ENCODE measurements at regions of chr16 and their contacts with region 1.

Region 1: GRCh38 chr16:66483689-66484481 is 56.8 kb downstream of the BEAN1 start:
- DNase-seq: peak; percentile 68
- H3K4me3 Mint-ChIP-seq: no peak overlapping the region
- H3K27ac Mint-ChIP-seq: peak overlapping the region; percentile 29
- H3K4me1 Mint-ChIP-seq: peaks cover 27% of the 10 kb centered on the region
- H3K27me3 Mint-ChIP-seq: no peaks in the 10 kb centered on the region

Region 2: GRCh38 chr16:66357153-66357928 is 126.5 kb before region 1 on chr16:
- intact Hi-C with region 1: loop called (anchors 5 kb)
- DNase-seq: no peak
- H3K4me3 Mint-ChIP-seq: no peak overlapping the region
- H3K27ac Mint-ChIP-seq: no peak overlapping the region
- H3K4me1 Mint-ChIP-seq: no peaks in the 10 kb centered on the region
- H3K27me3 Mint-ChIP-seq: peaks cover 15% of the 10 kb centered on the region

Region 3: GRCh38 chr16:66516808-66517585 is 33.1 kb after region 1 on chr16:
- intact Hi-C with region 1: loop called (anchors 1 kb)
- DNase-seq: peak; percentile 84
- H3K4me3 Mint-ChIP-seq: peak overlapping the region; percentile 88
- H3K27ac Mint-ChIP-seq: peak overlapping the region; percentile 99
- H3K4me1 Mint-ChIP-seq: peaks cover 78% of the 10 kb centered on the region
- H3K27me3 Mint-ChIP-seq: no peaks in the 10 kb centered on the region

Measured in activated T-helper 1 cell treated with anti-CD3 and anti-CD28 coated beads, Interleukin-12 subunit alpha, Interleukin-12 subunit beta, Interleukin-2, Interleukin-4 antibody, amounts not matched to agents 30 ng/mL and 10 ng/mL and 1 ng/mL, durations not matched to agents 14 hours and 24 hours and 36 hours (primary cell).